Activated T-helper 2 cell treated with anti-CD3 and anti-CD28 coated beads, Interferon-gamma antibody, Interleukin-2, Interleukin-4, amounts not matched to agents 10 μg/mL and 5 μg/mL and 100 μg/mL, durations not matched to agents 14 hours and 24 hours and 36 hours (primary cell): ENCODE measurements at regions of chr22 and their contacts with region 1.

Region 1: GRCh38 chr22:40326905-40327735 is 19.2 kb upstream of the ADSL start:
- DNase-seq: no peak
- H3K4me3 Mint-ChIP-seq: no peak overlapping the region
- H3K27ac Mint-ChIP-seq: no peak overlapping the region
- H3K4me1 Mint-ChIP-seq: peaks cover 89% of the 10 kb centered on the region
- H3K27me3 Mint-ChIP-seq: no peaks in the 10 kb centered on the region

Region 2: DNA sequence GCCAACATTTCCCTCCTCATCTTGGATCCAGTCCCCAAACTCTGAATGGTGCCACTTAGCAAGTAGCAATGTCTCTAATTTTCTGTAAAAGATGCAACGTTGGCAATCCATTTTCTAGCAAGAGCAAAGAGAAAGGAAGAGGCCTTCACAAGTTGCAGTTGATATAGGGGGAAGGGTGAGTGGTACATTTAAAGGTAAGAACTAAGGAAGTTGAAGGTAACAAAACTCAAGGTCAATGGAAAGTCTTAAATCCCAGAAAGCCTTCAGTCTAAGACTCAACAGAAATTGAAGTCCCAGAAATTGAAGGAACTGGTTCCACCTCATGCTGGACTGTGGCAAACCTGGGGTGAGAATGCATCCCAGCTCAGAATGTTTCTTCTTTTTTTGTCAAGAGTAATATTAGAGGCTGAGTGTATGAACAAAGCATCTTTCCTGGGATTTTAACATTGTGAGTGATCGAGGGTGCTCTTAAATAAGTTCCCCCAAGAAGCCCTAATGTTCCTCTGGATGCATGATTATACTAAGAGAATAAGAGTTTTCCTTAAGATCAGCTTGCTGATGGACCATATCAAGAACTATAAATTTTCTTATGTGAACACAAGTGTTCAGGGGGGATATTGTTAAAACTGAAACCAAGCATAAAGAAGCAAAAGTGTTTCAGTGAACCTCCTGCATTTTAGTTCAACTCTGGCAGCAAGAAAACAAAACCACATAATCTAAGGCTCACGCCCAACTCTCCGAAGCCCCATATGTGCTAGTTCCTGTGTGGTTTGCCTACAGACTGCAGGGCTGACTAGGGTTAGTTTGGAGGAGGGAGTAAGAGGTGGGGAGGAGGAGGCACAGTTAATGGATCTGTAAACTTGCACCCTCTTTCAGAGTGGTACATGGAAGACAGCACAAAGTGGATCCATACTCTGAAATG is 426.6 kb before region 1 on chr22 and contains the start of gene GRAP2:
- intact Hi-C with region 1: loop called (anchors 10 kb)
- DNase-seq: peak; percentile 78
- H3K4me3 Mint-ChIP-seq: peak within 1 kb of the TSS; percentile 98
- H3K27ac Mint-ChIP-seq: peak within 1 kb of the TSS; percentile 99
- H3K4me1 Mint-ChIP-seq: peaks cover 31% of the 10 kb centered on the region
- H3K27me3 Mint-ChIP-seq: no peaks in the 10 kb centered on the region
- total RNA-seq, gene GRAP2: 44.1 and 46.5 TPM in 2 replicates

Region 3: DNA sequence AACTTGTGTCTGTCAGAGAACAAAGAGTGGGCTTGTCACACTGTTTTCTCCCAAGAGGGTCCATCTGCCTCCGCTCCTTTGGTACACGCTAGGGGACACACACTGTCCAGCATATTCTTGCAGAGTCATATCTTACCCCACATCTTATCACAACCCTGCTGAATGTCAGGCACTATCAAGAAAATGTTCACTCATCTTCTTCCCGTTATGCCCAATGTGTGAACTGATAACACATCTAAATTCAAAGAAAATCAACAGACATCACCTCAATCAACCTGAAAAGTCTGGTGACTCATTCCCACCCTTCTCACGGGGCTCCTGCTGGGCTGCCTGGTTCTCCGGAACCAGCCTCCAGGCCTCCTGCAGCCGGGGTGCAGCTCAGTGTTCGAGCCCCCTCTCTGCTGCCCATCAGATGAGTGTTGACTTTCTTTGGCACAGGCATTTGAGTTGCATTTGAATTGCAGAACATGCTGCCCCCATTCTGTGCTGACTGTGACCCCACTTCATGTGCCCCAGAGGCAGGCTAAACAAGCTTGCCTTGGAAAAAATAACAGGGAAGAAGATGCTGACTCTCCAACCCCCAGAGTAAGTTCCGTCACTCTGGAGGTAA is 406.9 kb before region 1 on chr22:
- intact Hi-C with region 1: loop called (anchors 5 kb)
- DNase-seq: peak; percentile 57
- H3K4me3 Mint-ChIP-seq: peak overlapping the region; percentile 74
- H3K27ac Mint-ChIP-seq: peak overlapping the region; percentile 97
- H3K4me1 Mint-ChIP-seq: peaks cover 83% of the 10 kb centered on the region
- H3K27me3 Mint-ChIP-seq: no peaks in the 10 kb centered on the region

Region 4: GRCh38 chr22:40055143-40055883 is 271.8 kb before region 1 on chr22:
- intact Hi-C with region 1: loop called (anchors 5 kb)
- DNase-seq: no peak
- H3K4me3 Mint-ChIP-seq: peak overlapping the region; percentile 68
- H3K27ac Mint-ChIP-seq: peak overlapping the region; percentile 92
- H3K4me1 Mint-ChIP-seq: peaks cover 65% of the 10 kb centered on the region
- H3K27me3 Mint-ChIP-seq: no peaks in the 10 kb centered on the region

Region 5: DNA sequence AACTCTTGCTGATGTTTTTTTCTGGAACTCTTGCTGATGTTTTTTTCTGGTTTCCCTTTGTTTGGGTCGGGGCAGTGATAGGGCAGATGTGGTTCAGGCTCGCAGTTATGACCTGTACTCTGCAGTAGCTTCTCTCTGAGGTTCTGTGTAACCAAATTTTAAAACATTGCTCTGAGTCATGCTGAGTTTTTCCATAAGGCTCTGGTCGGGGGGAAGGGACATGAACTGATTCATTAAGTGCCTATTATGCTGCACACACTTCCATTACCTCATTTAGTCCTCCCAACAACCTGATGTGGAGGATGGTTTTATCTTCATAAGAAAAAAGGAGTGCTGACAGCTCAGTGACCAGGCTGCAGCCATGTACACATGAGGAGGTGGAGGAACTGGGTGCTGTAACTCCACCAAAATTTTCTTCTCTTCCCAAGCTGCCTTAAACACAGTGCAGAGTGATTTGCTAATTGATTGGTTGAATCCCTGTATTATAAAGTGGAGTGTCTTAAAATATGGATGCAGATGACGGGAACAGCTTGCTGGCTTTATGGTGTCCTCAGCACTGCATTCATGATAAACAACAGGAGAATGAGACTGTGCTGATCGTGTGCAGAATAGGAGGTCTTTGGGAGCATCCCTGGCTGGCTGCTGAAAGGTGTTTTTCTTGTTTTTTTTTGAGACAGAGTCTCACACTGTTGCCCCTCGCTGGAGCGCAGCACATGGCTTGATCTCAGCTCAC is 130.3 kb before region 1 on chr22:
- intact Hi-C with region 1: loop called (anchors 5 kb)
- DNase-seq: no peak
- H3K4me3 Mint-ChIP-seq: no peak overlapping the region
- H3K27ac Mint-ChIP-seq: peak overlapping the region; percentile 78
- H3K4me1 Mint-ChIP-seq: peaks cover 38% of the 10 kb centered on the region
- H3K27me3 Mint-ChIP-seq: no peaks in the 10 kb centered on the region

Region 6: GRCh38 chr22:40289991-40290459 is 37.1 kb before region 1 on chr22:
- intact Hi-C with region 1: loop called (anchors 1 kb)
- DNase-seq: peak; percentile 60
- H3K4me3 Mint-ChIP-seq: peak overlapping the region; percentile 63
- H3K27ac Mint-ChIP-seq: peak overlapping the region; percentile 94
- H3K4me1 Mint-ChIP-seq: peaks cover 49% of the 10 kb centered on the region
- H3K27me3 Mint-ChIP-seq: no peaks in the 10 kb centered on the region